ENCODE measurements at regions of chr1 and their contacts with region 1.

Region 1: GRCh38 chr1:202926720-202927491 is at the start of gene KLHL12:
- DNase-seq: peak; percentile 98 to 99 (median 98)
- ATAC-seq: peak; percentile 99
- H3K4me3 ChIP-seq: peak within 1 kb of the TSS; percentile 69
- H3K4me1 ChIP-seq: no peaks in the 10 kb centered on the region
- CTCF ChIP-seq: peak; percentile 59
- total RNA-seq, gene KLHL12: 26.4 to 33.4 (median 28.2) TPM

Region 2: DNA sequence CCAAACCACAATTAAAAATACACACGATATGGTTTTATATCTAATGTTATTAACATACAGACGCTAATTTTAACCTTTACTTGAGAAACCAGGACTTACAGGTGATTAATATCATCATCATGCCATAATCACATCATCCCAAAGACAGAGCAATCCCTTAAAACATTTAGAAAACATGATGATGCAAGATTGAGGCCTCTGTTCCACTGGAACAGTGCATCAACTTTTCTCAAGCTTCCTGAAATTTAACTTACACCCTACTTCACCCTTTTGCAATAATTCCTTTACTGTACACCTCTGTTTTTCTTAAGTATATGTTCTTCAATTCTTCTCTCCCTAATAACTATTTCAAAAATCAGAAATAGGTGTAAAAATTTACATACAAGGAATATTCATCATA is 156.8 kb before region 1 on chr1:
- intact Hi-C with region 1: no loop called
- DNase-seq: no peak
- ATAC-seq: no peak
- H3K4me3 ChIP-seq: no peak overlapping the region
- H3K4me1 ChIP-seq: no peaks in the 10 kb centered on the region
- CTCF ChIP-seq: no peak

Region 3: DNA sequence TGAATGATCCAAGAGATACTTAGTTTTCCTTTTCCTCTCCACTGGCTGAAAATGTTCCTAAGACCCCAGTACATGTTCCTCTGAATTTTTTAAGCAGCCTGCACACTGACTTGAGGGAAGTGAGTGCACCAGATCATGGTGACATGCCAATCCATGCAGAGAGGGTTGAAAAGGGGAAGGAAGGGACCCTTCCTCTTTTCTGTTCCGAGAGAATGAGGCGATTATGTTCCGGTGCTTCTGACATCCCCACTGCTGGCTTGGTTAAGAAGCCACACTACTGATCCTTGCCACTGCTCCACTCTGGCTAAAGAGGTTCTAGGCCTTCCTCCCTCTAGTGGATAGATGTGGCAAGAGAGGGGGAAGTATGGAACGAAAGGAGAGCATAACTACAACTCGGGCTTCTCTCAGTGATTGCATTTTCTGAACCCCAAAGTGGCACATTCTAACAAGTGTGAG is 42.0 kb after region 1 on chr1:
- intact Hi-C with region 1: loop called in 1 of 2 experiments (anchors 2 kb)
- DNase-seq: peak in 1 of 3 donors; percentile 65
- ATAC-seq: peak; percentile 69
- H3K4me3 ChIP-seq: no peak overlapping the region
- H3K4me1 ChIP-seq: peaks cover 7% of the 10 kb centered on the region
- CTCF ChIP-seq: peak; percentile 29

Region 4: DNA sequence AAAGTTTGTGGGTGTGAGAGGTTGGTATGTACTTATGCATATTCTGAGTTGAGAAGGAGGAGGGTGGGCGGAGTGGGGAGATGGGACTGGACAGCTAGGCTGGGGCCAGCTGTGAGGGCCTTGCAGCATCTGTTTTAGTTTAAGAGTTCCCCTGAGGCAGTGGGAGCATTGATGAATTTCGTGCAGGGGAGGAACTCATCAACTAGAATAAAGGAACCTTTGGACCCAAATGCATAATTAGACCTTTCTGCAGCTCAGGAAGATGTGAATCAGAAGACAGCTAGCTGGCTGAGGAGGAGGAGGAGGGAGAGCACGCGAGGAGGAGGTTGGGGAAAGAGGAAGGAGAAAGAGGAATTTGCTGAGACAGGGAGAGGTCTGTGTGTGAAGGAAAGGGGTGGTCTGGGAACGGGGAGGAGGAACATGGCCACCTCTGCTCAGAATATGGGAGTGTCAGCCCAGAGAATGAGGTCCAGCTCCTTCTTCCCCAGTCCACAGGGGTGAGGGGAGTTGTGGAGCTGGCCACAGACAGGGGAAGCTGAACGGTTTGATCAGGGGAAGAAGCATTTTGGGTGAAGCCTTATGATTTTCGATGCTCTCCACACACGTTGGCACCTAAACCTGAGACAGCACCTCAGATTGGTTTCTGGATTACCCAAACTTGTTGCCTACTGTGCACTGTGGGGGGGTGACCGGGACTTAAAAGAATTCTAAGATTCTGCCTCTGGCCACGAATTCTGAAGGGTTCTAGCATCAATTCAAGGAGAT is 131.2 kb after region 1 on chr1:
- intact Hi-C with region 1: no loop called
- DNase-seq: no peak
- ATAC-seq: peak; percentile 22
- H3K4me3 ChIP-seq: no peak overlapping the region
- H3K4me1 ChIP-seq: no peaks in the 10 kb centered on the region
- CTCF ChIP-seq: no peak